ENCODE measurements at regions of chr6 and their contacts with region 1.

Region 1: GRCh38 chr6:142845624-142846458 is 99.1 kb downstream of the HIVEP2 start:
- DNase-seq: no peak
- ATAC-seq: peak; percentile 60
- H3K4me3 Mint-ChIP-seq: peak overlapping the region; percentile 78
- H3K27ac Mint-ChIP-seq: peak overlapping the region; percentile 90
- H3K4me1 Mint-ChIP-seq: peaks cover 95% of the 10 kb centered on the region
- H3K27me3 Mint-ChIP-seq: no peaks in the 10 kb centered on the region
- CTCF ChIP-seq: no peak

Region 2: GRCh38 chr6:142737368-142738034 is 108.3 kb before region 1 on chr6:
- CTCF ChIA-PET with region 1: no interaction called
- POLR2A ChIA-PET with region 1: no interaction called
- intact Hi-C with region 1: no loop called
- DNase-seq: no peak
- ATAC-seq: no peak
- H3K4me3 Mint-ChIP-seq: no peak overlapping the region
- H3K27ac Mint-ChIP-seq: no peak overlapping the region
- H3K4me1 Mint-ChIP-seq: no peaks in the 10 kb centered on the region
- H3K27me3 Mint-ChIP-seq: peaks cover 2% of the 10 kb centered on the region
- CTCF ChIP-seq: no peak

Region 3: DNA sequence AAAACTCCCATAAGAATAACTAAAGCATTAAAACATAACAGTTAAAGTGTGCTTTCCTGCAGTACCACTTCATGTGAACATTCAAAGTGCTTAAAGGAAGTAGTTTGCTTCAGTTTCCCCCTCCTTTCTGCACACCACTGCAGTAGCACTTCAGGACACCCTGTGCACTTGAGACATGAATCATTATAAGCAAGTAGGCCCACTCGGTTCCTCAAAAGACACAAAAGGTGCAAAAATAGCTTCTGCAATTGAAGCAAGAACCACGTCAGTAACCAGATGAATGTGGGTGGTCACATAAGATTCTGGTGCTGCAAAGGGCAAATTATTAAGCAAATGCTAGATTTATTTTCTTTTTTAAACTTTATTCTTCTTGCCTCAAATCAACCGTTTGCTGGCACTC is 61.5 kb before region 1 on chr6:
- CTCF ChIA-PET with region 1: no interaction called
- POLR2A ChIA-PET with region 1: no interaction called
- intact Hi-C with region 1: loop called (anchors 2 kb)
- DNase-seq: no peak
- ATAC-seq: peak; percentile 98
- H3K4me3 Mint-ChIP-seq: peak overlapping the region; percentile 15
- H3K27ac Mint-ChIP-seq: peak overlapping the region; percentile 78
- H3K4me1 Mint-ChIP-seq: peaks cover 34% of the 10 kb centered on the region
- H3K27me3 Mint-ChIP-seq: no peaks in the 10 kb centered on the region
- CTCF ChIP-seq: no peak

Region 4: DNA sequence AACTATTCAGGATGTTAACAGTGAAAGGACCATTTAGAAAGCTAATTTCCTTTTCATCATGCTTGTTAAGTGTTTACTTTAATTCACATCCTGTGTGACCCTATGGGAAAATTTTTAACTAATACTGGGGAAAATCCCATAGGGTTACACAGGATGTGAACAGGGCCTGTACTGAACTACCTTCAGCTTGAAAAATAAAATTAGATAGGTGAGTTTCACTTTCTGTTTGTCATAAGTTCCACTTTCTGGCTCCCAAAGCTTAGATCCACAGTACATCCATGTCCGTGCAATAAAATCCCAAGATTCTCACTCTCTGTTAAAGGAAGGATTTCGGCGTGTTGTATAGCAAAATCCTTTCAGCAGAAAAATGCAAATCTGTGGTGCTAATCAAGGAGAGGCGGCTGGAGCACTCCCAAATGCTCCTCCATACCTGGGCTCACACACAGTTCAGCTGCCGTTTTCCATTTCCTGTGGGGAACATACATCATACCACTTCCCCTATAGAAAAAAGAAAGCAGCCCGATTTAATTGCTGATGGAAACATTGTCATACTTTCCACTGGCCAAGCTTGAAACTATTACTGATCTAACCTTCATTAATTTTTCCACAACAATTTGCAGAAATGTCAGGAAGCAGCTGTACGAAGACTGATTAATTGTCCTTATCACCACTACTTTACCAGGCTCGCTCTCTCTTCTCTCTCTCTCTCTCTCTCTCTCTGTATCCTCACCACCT is 26.1 kb before region 1 on chr6:
- CTCF ChIA-PET with region 1: interaction called, 3 read pairs
- POLR2A ChIA-PET with region 1: interaction called, 13 read pairs
- intact Hi-C with region 1: loop called (anchors 1 kb)
- DNase-seq: no peak
- ATAC-seq: peak; percentile 61
- H3K4me3 Mint-ChIP-seq: peak overlapping the region; percentile 74
- H3K27ac Mint-ChIP-seq: peak overlapping the region; percentile 93
- H3K4me1 Mint-ChIP-seq: peaks cover 79% of the 10 kb centered on the region
- H3K27me3 Mint-ChIP-seq: no peaks in the 10 kb centered on the region
- CTCF ChIP-seq: no peak

Region 5: DNA sequence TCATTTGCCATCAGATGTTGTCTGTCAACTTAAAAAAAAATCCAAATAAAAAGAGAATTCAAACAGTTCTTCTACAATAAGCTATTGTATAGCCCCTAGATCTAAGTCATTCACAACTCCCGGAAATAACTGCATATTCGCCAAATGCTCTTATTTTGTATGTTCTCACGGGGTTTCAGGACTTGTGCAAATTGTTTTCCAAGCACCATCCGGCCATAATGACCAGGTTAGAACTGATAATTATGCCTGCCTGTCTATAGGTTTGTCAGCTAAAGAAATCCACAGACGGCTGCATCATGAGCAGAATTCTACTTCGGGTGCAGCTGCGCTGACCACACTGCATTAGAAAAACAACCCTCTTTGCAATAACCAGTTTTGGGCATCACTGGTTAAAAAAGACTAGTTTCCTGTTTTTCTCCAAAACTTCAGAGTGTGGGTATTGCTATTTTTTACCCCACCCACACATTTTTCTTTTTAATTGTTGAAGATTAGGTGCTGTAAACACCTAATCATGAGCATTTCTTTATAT is 11.5 kb after region 1 on chr6:
- CTCF ChIA-PET with region 1: interaction called, 3 read pairs
- POLR2A ChIA-PET with region 1: interaction called, 16 read pairs
- intact Hi-C with region 1: loop called (anchors 1 kb)
- DNase-seq: no peak
- ATAC-seq: peak; percentile 26
- H3K4me3 Mint-ChIP-seq: peak overlapping the region; percentile 73
- H3K27ac Mint-ChIP-seq: peak overlapping the region; percentile 95
- H3K4me1 Mint-ChIP-seq: peaks cover 90% of the 10 kb centered on the region
- H3K27me3 Mint-ChIP-seq: no peaks in the 10 kb centered on the region
- CTCF ChIP-seq: no peak

Region 6: GRCh38 chr6:142926494-142927270 is 80.8 kb after region 1 on chr6:
- CTCF ChIA-PET with region 1: interaction called, 3 read pairs
- POLR2A ChIA-PET with region 1: interaction called, 14 read pairs
- intact Hi-C with region 1: loop called (anchors 5 kb)
- DNase-seq: peak; percentile 72
- ATAC-seq: peak; percentile 93
- H3K4me3 Mint-ChIP-seq: peak overlapping the region; percentile 86
- H3K27ac Mint-ChIP-seq: peak overlapping the region; percentile 93
- H3K4me1 Mint-ChIP-seq: peaks cover 50% of the 10 kb centered on the region
- H3K27me3 Mint-ChIP-seq: no peaks in the 10 kb centered on the region
- CTCF ChIP-seq: no peak

Region 7: GRCh38 chr6:144110210-144110609 is 1264.4 kb after region 1 on chr6:
- CTCF ChIA-PET with region 1: no interaction called
- POLR2A ChIA-PET with region 1: no interaction called
- intact Hi-C with region 1: no loop called
- DNase-seq: no peak
- ATAC-seq: no peak
- H3K4me3 Mint-ChIP-seq: no peak overlapping the region
- H3K27ac Mint-ChIP-seq: no peak overlapping the region
- H3K4me1 Mint-ChIP-seq: no peaks in the 10 kb centered on the region
- H3K27me3 Mint-ChIP-seq: no peaks in the 10 kb centered on the region
- CTCF ChIP-seq: no peak

Measured in activated B cell treated with CpG ODN at 0.5 μM for 24 hours (primary cell).